ENCODE measurements at regions of chr12 and their contacts with region 1.

Region 1: DNA sequence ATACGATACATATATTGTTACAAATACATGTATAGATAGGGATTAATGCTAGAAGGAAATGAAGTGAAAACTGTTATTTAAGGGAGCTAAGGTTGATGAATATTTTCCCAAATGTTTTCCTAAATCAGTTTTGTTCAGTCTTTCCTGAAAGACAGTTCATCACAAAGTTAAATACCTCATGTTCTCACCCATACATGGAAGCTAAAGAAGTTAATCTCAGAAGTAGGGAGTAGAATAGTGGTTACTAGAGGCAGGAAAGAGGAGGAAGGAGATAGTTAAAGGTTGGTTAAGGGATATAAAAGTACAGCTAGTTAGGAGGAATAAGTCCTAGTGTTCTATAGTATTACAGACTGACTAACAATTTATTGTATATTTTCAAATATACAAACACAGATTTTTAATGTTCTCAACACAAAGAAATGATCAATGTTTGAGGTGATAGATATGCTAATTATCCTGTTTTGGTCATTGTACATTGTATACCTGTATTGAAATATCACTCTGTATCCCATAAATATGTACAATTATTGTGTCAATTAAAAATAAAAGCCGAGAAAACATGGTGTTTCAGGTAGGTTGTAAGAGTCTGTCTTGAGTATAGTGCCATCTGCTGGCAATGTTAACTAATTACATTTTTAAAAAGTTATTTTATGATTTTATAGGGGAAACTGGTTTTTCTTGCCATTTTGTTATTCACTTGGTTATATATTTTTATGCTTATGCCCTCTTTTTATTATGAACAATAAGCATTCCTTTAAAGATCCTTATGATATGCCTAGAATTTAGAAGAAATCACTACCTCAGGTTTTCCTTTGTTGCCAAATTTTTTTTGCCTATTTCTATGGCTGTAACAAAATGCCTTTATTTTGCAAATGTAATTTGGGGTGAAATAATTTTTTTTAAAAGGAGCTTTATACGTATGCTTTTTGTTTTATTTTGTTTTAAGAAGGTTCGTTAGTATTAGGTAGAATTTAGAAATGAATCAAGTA is 26.9 kb downstream of the ZDHHC17 start:
- DNase-seq: peak in 7 of 9 donors; percentile 17 to 57 (median 50)
- ATAC-seq: peak; percentile 57
- H3K4me3 ChIP-seq: no peak overlapping the region
- H3K4me3 Mint-ChIP-seq: no peak overlapping the region
- H3K27ac ChIP-seq: no peak overlapping the region
- H3K27ac Mint-ChIP-seq: peak overlapping the region in 2 of 9 donors; percentile 19 to 25
- H3K4me1 ChIP-seq: no peaks in the 10 kb centered on the region
- H3K4me1 Mint-ChIP-seq: peaks cover 2 to 54% (median 41%) of the 10 kb centered on the region in 7 donors
- H3K27me3 ChIP-seq: no peaks in the 10 kb centered on the region
- H3K27me3 Mint-ChIP-seq: no peaks in the 10 kb centered on the region

Region 2: GRCh38 chr12:76621582-76622024 is 169.3 kb before region 1 on chr12:
- CTCF ChIA-PET with region 1: interaction called, 88 read pairs
- POLR2A ChIA-PET with region 1: interaction called, 7 read pairs
- intact Hi-C with region 1: loop called (anchors 1 kb)
- DNase-seq: peak; percentile 29 to 76 (median 58)
- ATAC-seq: peak; percentile 95
- H3K4me3 ChIP-seq: no peak overlapping the region
- H3K4me3 Mint-ChIP-seq: no peak overlapping the region
- H3K27ac ChIP-seq: no peak overlapping the region
- H3K27ac Mint-ChIP-seq: peak overlapping the region in 2 of 9 donors; percentile 1 to 44
- H3K4me1 ChIP-seq: no peaks in the 10 kb centered on the region
- H3K4me1 Mint-ChIP-seq: peaks cover 0 to 6% (median 5%) of the 10 kb centered on the region in 7 donors
- H3K27me3 ChIP-seq: no peaks in the 10 kb centered on the region
- H3K27me3 Mint-ChIP-seq: peaks cover 0 to 12% (median 3%) of the 10 kb centered on the region in 5 donors

Region 3: DNA sequence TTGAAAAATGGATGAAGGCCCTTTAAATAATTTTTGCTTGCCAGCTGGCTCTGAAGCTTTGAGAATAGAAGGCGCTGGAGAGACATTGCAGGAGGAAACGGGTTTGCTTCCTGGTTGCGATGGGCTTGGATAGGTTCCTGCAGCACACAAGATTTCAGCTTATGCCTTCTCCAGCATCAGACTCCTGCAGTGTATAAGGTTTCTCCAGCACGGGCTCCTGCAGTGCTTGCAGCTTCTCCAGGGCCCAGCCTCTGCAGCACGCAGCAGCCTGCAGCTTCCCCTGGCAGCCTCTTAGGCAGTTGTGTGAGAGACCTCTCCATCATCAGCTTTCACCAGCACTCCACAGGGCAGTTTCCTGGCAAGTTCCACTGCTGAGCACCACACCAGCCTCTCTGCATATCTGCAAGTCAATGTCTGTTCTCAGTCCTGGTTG is 105.6 kb before region 1 on chr12:
- CTCF ChIA-PET with region 1: interaction called, 4 read pairs
- POLR2A ChIA-PET with region 1: no interaction called
- intact Hi-C with region 1: loop called (anchors 1 kb)
- DNase-seq: no peak
- ATAC-seq: peak; percentile 32
- H3K4me3 ChIP-seq: no peak overlapping the region
- H3K4me3 Mint-ChIP-seq: no peak overlapping the region
- H3K27ac ChIP-seq: no peak overlapping the region
- H3K27ac Mint-ChIP-seq: no peak overlapping the region
- H3K4me1 ChIP-seq: no peaks in the 10 kb centered on the region
- H3K4me1 Mint-ChIP-seq: peaks cover 0 to 9% (median 4%) of the 10 kb centered on the region in 7 donors
- H3K27me3 ChIP-seq: no peaks in the 10 kb centered on the region
- H3K27me3 Mint-ChIP-seq: peaks cover 0 to 8% (median 0%) of the 10 kb centered on the region in 5 donors

Region 4: DNA sequence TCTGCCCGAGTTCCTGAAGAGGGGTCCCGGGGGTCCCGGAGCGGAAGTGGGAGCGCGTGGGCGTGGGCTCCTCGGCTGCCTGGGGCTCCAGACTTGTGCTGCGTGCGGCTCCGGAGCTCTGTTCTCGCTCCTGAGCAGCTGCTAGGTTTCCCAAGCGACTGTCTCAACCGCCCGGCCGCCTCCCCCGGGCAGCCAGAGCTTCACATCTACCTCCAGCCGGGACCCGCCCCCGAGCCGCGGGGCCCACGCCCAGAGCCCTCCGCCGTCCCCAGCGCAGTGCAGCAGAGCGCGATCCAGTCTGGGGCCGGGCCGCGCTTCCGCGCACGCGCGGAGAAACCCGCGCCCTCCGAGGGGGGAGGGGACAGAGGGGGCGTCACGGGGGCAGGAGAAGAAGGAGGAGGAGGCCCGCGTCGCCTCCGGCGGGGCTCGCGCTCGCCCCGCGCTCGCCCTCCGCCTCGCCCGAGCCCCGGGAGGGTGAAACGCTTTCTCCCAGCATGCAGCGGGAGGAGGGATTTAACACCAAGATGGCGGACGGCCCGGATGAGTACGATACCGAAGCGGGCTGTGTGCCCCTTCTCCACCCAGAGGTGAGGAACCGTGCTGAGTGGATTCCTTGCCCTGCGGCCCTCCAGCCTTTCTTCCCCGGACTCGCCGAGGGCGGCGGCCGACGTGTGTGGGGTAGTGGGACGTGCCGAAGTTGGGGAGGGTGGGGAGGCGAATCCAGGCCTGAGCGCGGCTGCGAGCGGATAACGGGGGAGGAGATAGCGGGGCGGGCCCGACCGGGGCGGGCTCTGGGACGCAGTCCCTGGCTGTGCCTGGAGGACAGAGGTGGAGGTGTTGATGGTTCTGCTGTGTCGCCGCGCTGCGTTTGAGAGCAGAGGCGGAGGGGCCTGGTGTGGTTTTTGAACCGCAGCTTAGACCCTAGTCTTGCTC is 26.8 kb before region 1 on chr12 and contains the start of gene ZDHHC17:
- CTCF ChIA-PET with region 1: interaction called, 5 read pairs
- POLR2A ChIA-PET with region 1: interaction called, 6 read pairs
- intact Hi-C with region 1: loop called (anchors 1 kb)
- DNase-seq: peak; percentile 90 to 95 (median 93)
- ATAC-seq: peak; percentile 90
- H3K4me3 ChIP-seq: peak within 1 kb of the TSS; percentile 84
- H3K4me3 Mint-ChIP-seq: peak within 1 kb of the TSS; percentile 92 to 98 (median 97)
- H3K27ac ChIP-seq: peak within 1 kb of the TSS; percentile 94
- H3K27ac Mint-ChIP-seq: peak within 1 kb of the TSS; percentile 95 to 99 (median 97)
- H3K4me1 ChIP-seq: peaks cover 8 to 13% of the 10 kb centered on the region in 2 donors
- H3K4me1 Mint-ChIP-seq: peaks cover 17 to 57% (median 46%) of the 10 kb centered on the region in 7 donors
- H3K27me3 ChIP-seq: no peaks in the 10 kb centered on the region
- H3K27me3 Mint-ChIP-seq: peaks cover 0 to 13% (median 0%) of the 10 kb centered on the region in 5 donors
- total RNA-seq, gene ZDHHC17: 27.3 to 60.9 (median 56.3) TPM

Region 5: GRCh38 chr12:76810671-76811419 is 20.0 kb after region 1 on chr12:
- CTCF ChIA-PET with region 1: no interaction called
- POLR2A ChIA-PET with region 1: no interaction called
- intact Hi-C with region 1: loop called in 1 of 2 experiments (anchors 2 kb)
- DNase-seq: no peak
- ATAC-seq: no peak
- H3K4me3 ChIP-seq: no peak overlapping the region
- H3K4me3 Mint-ChIP-seq: no peak overlapping the region
- H3K27ac ChIP-seq: no peak overlapping the region
- H3K27ac Mint-ChIP-seq: peak overlapping the region in 2 of 9 donors; percentile 9 to 22
- H3K4me1 ChIP-seq: no peaks in the 10 kb centered on the region
- H3K4me1 Mint-ChIP-seq: peaks cover 0 to 8% (median 0%) of the 10 kb centered on the region in 7 donors
- H3K27me3 ChIP-seq: no peaks in the 10 kb centered on the region
- H3K27me3 Mint-ChIP-seq: no peaks in the 10 kb centered on the region

Region 6: GRCh38 chr12:76927170-76927784 is 136.4 kb after region 1 on chr12:
- CTCF ChIA-PET with region 1: no interaction called
- POLR2A ChIA-PET with region 1: no interaction called
- intact Hi-C with region 1: loop called in 1 of 2 experiments (anchors 1 kb)
- DNase-seq: peak in 4 of 9 donors; percentile 9 to 18 (median 14)
- ATAC-seq: no peak
- H3K4me3 ChIP-seq: no peak overlapping the region
- H3K4me3 Mint-ChIP-seq: no peak overlapping the region
- H3K27ac ChIP-seq: no peak overlapping the region
- H3K27ac Mint-ChIP-seq: no peak overlapping the region
- H3K4me1 ChIP-seq: no peaks in the 10 kb centered on the region
- H3K4me1 Mint-ChIP-seq: peaks cover 0 to 1% (median 0%) of the 10 kb centered on the region in 7 donors
- H3K27me3 ChIP-seq: no peaks in the 10 kb centered on the region
- H3K27me3 Mint-ChIP-seq: peaks cover 8 to 28% (median 25%) of the 10 kb centered on the region in 5 donors

Region 7: GRCh38 chr12:77010691-77011548 is 220.1 kb after region 1 on chr12:
- CTCF ChIA-PET with region 1: interaction called, 3 read pairs
- POLR2A ChIA-PET with region 1: no interaction called
- intact Hi-C with region 1: loop called (anchors 1 to 2 kb)
- DNase-seq: peak; percentile 19 to 65 (median 45)
- ATAC-seq: peak; percentile 84
- H3K4me3 ChIP-seq: no peak overlapping the region
- H3K4me3 Mint-ChIP-seq: peak overlapping the region in 2 of 10 donors; percentile 8 to 17
- H3K27ac ChIP-seq: no peak overlapping the region
- H3K27ac Mint-ChIP-seq: no peak overlapping the region
- H3K4me1 ChIP-seq: no peaks in the 10 kb centered on the region
- H3K4me1 Mint-ChIP-seq: peaks cover 0 to 6% (median 5%) of the 10 kb centered on the region in 7 donors
- H3K27me3 ChIP-seq: no peaks in the 10 kb centered on the region
- H3K27me3 Mint-ChIP-seq: peaks cover 9 to 20% (median 18%) of the 10 kb centered on the region in 5 donors

Measured in naive thymus-derived CD4-positive, alpha-beta T cell (primary cell).